Transverse colon (tissue), 4 donors: ENCODE measurements at regions of chr4 and their contacts with region 1.

Region 1: GRCh38 chr4:153127760-153128494 is 76.3 kb upstream of the TRIM2 start:
- DNase-seq: peak; percentile 88
- H3K4me3 ChIP-seq: no peak overlapping the region
- H3K27ac ChIP-seq: no peak overlapping the region
- H3K4me1 ChIP-seq: no peaks in the 10 kb centered on the region
- H3K27me3 ChIP-seq: no peaks in the 10 kb centered on the region
- CTCF ChIP-seq: peak; percentile 82 to 87 (median 84)
- EP300 ChIP-seq: no peak
- POLR2A ChIP-seq: no peak

Region 2: GRCh38 chr4:152850377-152850776 is 277.6 kb before region 1 on chr4:
- in situ Hi-C with region 1: loop called in 1 of 4 experiments (anchors 5 kb)
- intact Hi-C with region 1: no loop called
- DNase-seq: no peak
- H3K4me3 ChIP-seq: no peak overlapping the region
- H3K27ac ChIP-seq: no peak overlapping the region
- H3K4me1 ChIP-seq: peaks cover 0 to 14% (median 0%) of the 10 kb centered on the region in 4 donors
- H3K27me3 ChIP-seq: no peaks in the 10 kb centered on the region
- CTCF ChIP-seq: no peak
- EP300 ChIP-seq: no peak
- POLR2A ChIP-seq: no peak

Region 3: GRCh38 chr4:153083447-153083947 is 44.4 kb before region 1 on chr4:
- in situ Hi-C with region 1: loop called in 1 of 4 experiments (anchors 5 kb)
- intact Hi-C with region 1: loop called (anchors 2 kb)
- DNase-seq: peak; percentile 69
- H3K4me3 ChIP-seq: no peak overlapping the region
- H3K27ac ChIP-seq: no peak overlapping the region
- H3K4me1 ChIP-seq: peaks cover 0 to 11% (median 0%) of the 10 kb centered on the region in 4 donors
- H3K27me3 ChIP-seq: no peaks in the 10 kb centered on the region
- CTCF ChIP-seq: peak; percentile 53 to 66 (median 62)
- EP300 ChIP-seq: no peak
- POLR2A ChIP-seq: no peak

Region 4: GRCh38 chr4:153318696-153319320 is 190.9 kb after region 1 on chr4:
- in situ Hi-C with region 1: loop called in 1 of 4 experiments (anchors 25 kb)
- intact Hi-C with region 1: no loop called
- DNase-seq: no peak
- H3K4me3 ChIP-seq: no peak overlapping the region
- H3K27ac ChIP-seq: no peak overlapping the region
- H3K4me1 ChIP-seq: no peaks in the 10 kb centered on the region
- H3K27me3 ChIP-seq: no peaks in the 10 kb centered on the region
- CTCF ChIP-seq: peak; percentile 47 to 59 (median 56)
- EP300 ChIP-seq: no peak
- POLR2A ChIP-seq: no peak

Region 5: GRCh38 chr4:153594210-153594609 is 466.3 kb after region 1 on chr4:
- in situ Hi-C with region 1: loop called in 1 of 4 experiments (anchors 25 kb)
- intact Hi-C with region 1: no loop called
- DNase-seq: no peak
- H3K4me3 ChIP-seq: no peak overlapping the region
- H3K27ac ChIP-seq: no peak overlapping the region
- H3K4me1 ChIP-seq: no peaks in the 10 kb centered on the region
- H3K27me3 ChIP-seq: no peaks in the 10 kb centered on the region
- CTCF ChIP-seq: no peak
- EP300 ChIP-seq: no peak
- POLR2A ChIP-seq: no peak